Posterior vena cava (tissue), 2 donors: ENCODE measurements at regions of chr12 and their contacts with region 1.

Region 1: GRCh38 chr12:68889647-68890121 is 43.3 kb downstream of the CPM start:
- DNase-seq: no peak

Region 2: DNA sequence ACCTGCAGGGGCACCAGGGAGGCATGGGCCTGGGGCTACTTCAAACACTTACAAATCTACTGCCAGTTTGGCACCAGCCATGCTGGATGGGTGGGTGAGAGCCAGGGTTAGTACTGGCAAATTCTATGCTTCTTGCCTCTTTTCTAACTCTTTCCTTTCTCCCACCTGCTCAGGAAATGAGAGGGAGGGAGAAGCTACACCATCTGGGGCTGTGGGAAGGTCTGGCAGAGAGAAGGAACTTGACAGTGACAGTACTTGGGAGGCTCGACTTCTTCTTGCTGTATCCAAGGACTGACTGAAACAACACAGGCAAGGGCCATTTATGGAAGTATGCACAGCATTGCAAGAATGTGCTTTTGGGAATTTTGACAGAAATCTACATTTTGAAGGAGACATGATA is 1390.7 kb before region 1 on chr12:
- intact Hi-C with region 1: no loop called
- DNase-seq: no peak

Region 3: GRCh38 chr12:68113644-68114043 is 776.0 kb before region 1 on chr12:
- intact Hi-C with region 1: loop called in 1 of 2 experiments (anchors 5 kb)
- DNase-seq: no peak